ENCODE measurements at regions of chr4 and their contacts with region 1.

Region 1: DNA sequence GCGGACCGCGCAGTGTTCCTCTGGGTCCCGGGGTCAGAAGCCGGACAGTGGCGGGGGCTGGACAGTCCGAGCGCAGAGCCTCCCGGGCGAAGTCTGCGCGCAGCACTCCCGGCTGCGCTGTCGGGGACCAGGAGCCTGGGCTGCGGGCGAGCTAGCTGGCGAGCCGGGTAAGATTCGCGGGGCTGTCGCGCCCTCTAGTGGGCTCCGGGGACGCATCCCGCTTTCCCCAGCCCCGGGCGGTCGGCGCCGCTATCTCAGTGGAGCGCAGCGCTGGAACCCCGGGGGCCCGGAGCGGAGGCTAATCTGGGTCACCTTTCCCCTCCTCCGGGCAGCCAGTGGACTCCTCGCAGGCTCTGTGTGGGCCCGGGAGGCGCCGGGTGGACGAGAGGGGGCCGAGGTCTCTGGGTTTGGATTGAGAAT is 4.2 kb downstream of the PDGFRA start:
- DNase-seq: peak; percentile 77
- H3K4me3 ChIP-seq: peak overlapping the region in 2 of 3 experiments; percentile 43 to 62
- H3K27ac ChIP-seq: no peak overlapping the region
- H3K4me1 ChIP-seq: peaks cover 24% of the 10 kb centered on the region
- H3K27me3 ChIP-seq: peaks cover 49 to 53% of the 10 kb centered on the region in 2 experiments
- CTCF ChIP-seq: peak; percentile 81 to 95
- POLR2A ChIP-seq: no peak

Region 2: DNA sequence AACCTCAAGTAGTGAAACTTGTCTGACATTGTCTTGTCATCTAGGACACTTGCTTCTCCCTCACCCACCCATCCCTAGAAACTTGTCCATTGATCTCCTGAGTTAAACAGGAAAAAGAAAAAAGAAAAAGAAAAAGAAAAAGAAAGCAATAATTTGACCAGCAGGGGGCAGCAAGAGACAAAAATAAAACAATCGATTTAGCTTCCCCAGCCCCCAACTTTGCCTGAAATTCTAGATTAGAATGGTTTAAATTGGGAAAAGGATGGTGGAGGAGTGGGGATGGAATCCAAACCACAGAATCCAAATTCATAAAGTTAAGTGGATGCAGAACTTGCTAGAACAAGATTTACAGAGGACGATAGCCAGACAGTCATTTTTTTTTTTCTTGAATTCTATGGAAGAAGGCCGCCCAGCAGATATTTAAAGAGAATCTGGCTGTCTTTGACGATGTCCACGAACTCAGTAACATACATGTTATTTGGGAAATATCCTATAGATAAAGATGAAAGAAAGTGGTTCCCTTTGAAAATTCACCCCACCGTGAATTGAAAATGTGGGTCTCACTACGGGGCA is 1857.1 kb before region 1 on chr4:
- CTCF ChIA-PET with region 1: interaction called, 84 read pairs
- POLR2A ChIA-PET with region 1: no interaction called
- dilution Hi-C with region 1: no loop called
- intact Hi-C with region 1: loop called (anchors 1 kb)
- DNase-seq: peak; percentile 51
- H3K4me3 ChIP-seq: no peak overlapping the region
- H3K27ac ChIP-seq: no peak overlapping the region
- H3K4me1 ChIP-seq: no peaks in the 10 kb centered on the region
- H3K27me3 ChIP-seq: peaks cover 0 to 3% of the 10 kb centered on the region in 2 experiments
- CTCF ChIP-seq: peak; percentile 33
- POLR2A ChIP-seq: no peak

Region 3: GRCh38 chr4:52911684-52912294 is 1321.5 kb before region 1 on chr4:
- CTCF ChIA-PET with region 1: interaction called, 5 read pairs
- POLR2A ChIA-PET with region 1: no interaction called
- dilution Hi-C with region 1: no loop called
- intact Hi-C with region 1: loop called (anchors 5 kb)
- DNase-seq: peak; percentile 76
- H3K4me3 ChIP-seq: no peak overlapping the region
- H3K27ac ChIP-seq: no peak overlapping the region
- H3K4me1 ChIP-seq: no peaks in the 10 kb centered on the region
- H3K27me3 ChIP-seq: no peaks in the 10 kb centered on the region
- CTCF ChIP-seq: peak; percentile 85 to 89
- POLR2A ChIP-seq: no peak

Region 4: DNA sequence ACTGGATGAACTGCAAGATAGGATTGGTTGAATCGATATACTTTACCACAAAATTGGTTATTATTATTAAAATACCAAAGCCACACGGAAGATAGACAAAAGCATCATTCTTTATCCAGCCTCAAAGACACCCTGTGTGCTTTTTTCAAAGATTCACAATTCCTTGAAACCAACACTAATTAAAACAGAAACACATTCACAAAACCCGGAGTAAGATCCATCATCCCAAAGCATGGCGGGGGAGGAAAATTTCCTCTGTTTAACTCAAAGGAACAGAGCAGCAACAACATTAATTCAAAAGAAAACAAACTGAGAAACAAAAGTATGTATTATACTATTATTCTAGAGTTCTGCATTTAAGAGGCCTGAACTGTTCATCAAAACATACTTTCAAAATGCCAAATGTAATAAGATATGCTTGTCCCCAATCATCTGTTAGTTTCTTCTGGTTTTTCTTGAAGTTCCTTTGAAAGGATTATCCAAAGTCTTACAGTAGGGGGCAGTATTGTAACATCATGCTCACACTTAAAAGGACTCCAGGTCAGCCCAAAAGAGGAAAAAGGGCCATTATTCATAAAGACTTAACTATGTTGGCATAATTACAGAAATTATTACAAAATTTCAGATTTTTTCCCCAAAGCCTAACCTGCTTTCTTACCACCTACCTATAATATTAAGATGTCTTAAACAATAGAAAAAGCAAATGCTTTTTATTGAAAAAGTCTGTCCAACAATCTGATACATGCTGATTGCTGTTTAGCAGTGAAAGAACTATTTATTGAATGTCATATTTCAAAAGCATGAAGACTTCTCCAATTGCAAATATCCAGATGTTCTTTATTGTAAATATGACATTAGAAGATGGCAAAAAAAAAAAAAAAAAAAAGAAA is 1036.2 kb before region 1 on chr4:
- CTCF ChIA-PET with region 1: interaction called, 128 read pairs
- POLR2A ChIA-PET with region 1: no interaction called
- dilution Hi-C with region 1: no loop called
- intact Hi-C with region 1: loop called (anchors 1 kb)
- DNase-seq: peak; percentile 84
- H3K4me3 ChIP-seq: no peak overlapping the region
- H3K27ac ChIP-seq: no peak overlapping the region
- H3K4me1 ChIP-seq: no peaks in the 10 kb centered on the region
- H3K27me3 ChIP-seq: no peaks in the 10 kb centered on the region
- CTCF ChIP-seq: peak; percentile 46 to 49
- POLR2A ChIP-seq: no peak

Region 5: GRCh38 chr4:53490965-53491622 is 742.2 kb before region 1 on chr4:
- CTCF ChIA-PET with region 1: interaction called, 34 read pairs
- POLR2A ChIA-PET with region 1: no interaction called
- dilution Hi-C with region 1: no loop called
- intact Hi-C with region 1: loop called (anchors 2 kb)
- DNase-seq: peak; percentile 85
- H3K4me3 ChIP-seq: no peak overlapping the region
- H3K27ac ChIP-seq: no peak overlapping the region
- H3K4me1 ChIP-seq: peaks cover 6% of the 10 kb centered on the region
- H3K27me3 ChIP-seq: no peaks in the 10 kb centered on the region
- CTCF ChIP-seq: peak; percentile 52 to 55
- POLR2A ChIP-seq: no peak

Region 6: GRCh38 chr4:53702334-53703266 is 530.7 kb before region 1 on chr4:
- CTCF ChIA-PET with region 1: interaction called, 80 read pairs
- POLR2A ChIA-PET with region 1: no interaction called
- dilution Hi-C with region 1: no loop called
- intact Hi-C with region 1: loop called (anchors 1 kb)
- DNase-seq: peak; percentile 71
- H3K4me3 ChIP-seq: peak overlapping the region in 2 of 3 experiments; percentile 2 to 13
- H3K27ac ChIP-seq: peak overlapping the region; percentile 10
- H3K4me1 ChIP-seq: peaks cover 19% of the 10 kb centered on the region
- H3K27me3 ChIP-seq: no peaks in the 10 kb centered on the region
- CTCF ChIP-seq: peak in 1 of 2 donors; percentile 8
- POLR2A ChIP-seq: no peak

Region 7: DNA sequence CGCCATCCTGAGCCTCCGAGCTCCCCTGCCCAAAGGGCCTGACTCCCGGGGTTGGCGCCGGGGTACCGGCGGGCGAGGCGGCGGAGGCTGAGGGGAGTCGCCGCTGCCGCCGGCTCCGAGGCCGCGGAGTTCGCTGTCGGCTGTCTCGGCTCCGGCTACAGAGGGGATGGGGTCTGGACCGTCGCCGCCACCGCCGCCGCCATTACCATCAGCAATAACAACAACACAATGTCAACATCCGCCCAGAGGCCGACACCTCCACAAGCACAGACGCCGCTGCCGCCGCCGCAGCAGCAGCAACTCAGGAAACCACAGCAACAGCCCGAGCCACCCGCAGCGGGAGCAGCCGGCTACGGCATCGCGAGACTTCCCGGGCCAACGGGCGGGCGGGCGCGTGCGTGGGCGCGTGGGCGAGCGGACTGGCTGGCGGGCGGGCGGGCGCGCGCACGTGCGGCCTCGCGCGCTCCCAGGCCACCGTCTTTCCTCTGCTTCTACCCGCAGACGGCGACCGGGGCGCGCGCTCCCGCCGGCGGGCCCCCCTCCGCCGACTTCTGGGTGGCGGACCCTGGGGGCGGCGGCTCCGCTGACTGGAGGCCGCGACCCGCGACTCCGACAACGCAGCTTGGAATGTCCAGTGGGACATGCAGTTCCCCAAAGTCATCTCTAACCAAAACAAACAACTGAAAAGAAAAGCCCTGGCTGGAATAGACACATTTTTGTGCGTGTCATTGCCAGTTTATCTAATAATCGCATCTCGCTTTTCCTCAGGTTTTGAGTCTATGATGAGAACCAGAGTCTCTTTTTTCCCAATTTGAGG is 168.8 kb before region 1 on chr4 and contains the start of gene CHIC2:
- CTCF ChIA-PET with region 1: interaction called, 14 read pairs
- POLR2A ChIA-PET with region 1: no interaction called
- dilution Hi-C with region 1: no loop called
- intact Hi-C with region 1: no loop called
- DNase-seq: peak; percentile 94
- H3K4me3 ChIP-seq: peak within 1 kb of the TSS; percentile 55 to 98 (median 96)
- H3K27ac ChIP-seq: peak within 1 kb of the TSS; percentile 96
- H3K4me1 ChIP-seq: peaks cover 66% of the 10 kb centered on the region
- H3K27me3 ChIP-seq: no peaks in the 10 kb centered on the region
- CTCF ChIP-seq: no peak
- POLR2A ChIP-seq: peak; percentile 88
- total RNA-seq, gene CHIC2: 43.3 and 43.8 TPM in 2 replicates

Region 8: DNA sequence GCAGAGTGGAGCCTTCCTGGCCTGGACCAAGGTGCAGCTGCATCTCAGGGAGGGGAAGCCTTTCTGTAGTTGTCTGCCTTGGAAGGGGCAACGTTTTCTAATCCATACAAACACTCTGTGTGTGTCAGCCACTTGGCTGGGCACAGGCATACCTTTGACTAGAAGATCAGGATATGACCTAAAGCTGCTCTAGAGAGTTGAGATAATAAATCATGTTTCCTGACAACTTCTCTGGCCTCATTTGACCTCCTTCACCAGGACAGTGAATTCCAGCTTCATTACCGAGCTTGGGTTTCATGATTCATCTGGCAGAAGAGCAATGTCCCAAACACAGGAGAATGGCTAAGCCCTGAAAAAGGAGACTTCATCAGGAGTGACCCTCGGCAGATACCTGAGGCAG is 334.9 kb after region 1 on chr4:
- CTCF ChIA-PET with region 1: no interaction called
- POLR2A ChIA-PET with region 1: no interaction called
- dilution Hi-C with region 1: no loop called
- intact Hi-C with region 1: no loop called
- DNase-seq: no peak
- H3K4me3 ChIP-seq: no peak overlapping the region
- H3K27ac ChIP-seq: no peak overlapping the region
- H3K4me1 ChIP-seq: no peaks in the 10 kb centered on the region
- H3K27me3 ChIP-seq: no peaks in the 10 kb centered on the region
- CTCF ChIP-seq: no peak
- POLR2A ChIP-seq: no peak

Measured in endothelial cell of umbilical vein (primary cell).